Activated CD4-positive, alpha-beta T cell treated with anti-CD3 and anti-CD28 coated beads for 36 hours (primary cell): ENCODE measurements at regions of chr12 and their contacts with region 1.

Region 1: DNA sequence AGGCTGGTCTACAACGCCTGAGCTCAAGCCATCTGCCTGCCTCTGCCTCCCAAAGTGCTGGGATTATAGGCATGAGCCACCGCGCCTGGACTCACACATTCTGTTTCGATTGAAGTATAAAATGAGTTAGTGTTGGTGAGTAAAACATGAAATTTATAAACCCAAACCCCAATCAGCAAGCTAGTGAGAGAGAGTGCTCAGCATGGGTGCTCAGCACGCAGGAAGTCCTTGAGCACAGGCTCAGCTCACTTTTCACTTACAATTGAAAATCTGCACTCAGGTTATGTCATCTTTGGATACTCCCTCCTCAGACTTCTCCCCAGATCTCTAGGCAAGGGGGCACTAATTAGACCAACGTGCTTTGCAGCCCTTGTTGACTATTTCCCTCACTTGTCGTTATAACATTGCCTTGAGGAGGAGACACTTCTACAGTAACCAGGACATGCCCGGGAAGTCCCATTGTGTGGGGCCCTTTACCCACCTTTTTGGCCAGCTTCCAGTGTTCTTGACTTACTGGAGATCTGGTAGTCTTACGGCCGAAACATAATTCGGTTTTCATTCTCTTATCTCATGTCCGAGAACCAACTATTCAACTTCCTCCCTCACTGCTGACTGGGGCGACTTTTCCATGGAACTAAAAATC is 68.5 kb upstream of the AMN1 start:
- DNase-seq: peak; percentile 23
- ATAC-seq: peak; percentile 74
- H3K4me3 Mint-ChIP-seq: no peak overlapping the region
- H3K27ac Mint-ChIP-seq: peak overlapping the region; percentile 58
- H3K4me1 Mint-ChIP-seq: peaks cover 29% of the 10 kb centered on the region
- H3K27me3 Mint-ChIP-seq: no peaks in the 10 kb centered on the region

Region 2: DNA sequence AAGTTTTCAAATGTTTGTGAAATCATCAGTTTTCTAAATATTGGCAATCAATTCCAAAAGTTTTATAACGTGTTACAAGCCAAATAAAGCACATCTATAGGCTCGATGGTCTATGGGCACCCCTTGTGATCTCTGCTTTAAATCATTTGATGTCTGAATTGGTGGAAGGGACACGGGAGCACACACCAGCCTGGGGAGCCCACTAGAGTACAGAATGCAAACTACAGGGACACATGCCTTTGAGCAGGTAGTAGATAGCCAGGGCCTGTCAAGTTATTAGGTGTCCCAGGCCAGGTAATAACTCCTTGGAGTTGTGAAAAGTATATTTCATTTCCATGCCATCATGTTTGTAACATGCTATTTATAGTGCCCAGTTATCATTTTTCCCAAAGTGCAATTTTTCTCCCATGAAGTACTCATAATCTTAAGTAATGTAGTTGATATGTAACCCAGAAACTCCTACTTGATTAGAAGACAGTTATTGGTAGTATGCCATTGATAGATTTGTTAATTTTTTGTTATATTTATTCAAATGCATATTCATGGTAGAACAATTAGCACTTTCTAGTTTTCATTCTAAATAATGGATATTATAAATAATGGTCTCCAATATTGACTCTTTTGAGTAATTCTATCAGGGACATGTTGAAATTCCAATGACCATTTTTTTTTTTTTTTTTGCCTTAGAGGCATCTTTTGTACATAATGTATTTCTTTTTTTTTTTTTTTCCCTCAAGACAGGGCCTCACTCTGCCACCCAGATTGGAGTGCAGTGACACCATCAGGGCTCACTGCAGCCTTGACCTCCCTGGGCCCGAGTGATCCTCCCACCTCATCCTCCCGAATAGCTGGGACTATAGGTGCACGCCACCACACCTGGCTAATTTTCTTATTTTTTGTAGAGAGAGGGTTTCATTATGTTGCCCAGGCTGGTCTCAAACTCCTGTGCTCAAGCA is 505.1 kb after region 1 on chr12:
- CTCF ChIA-PET with region 1: no interaction called
- POLR2A ChIA-PET with region 1: no interaction called
- intact Hi-C with region 1: loop called in 1 of 2 experiments (anchors 10 kb)
- DNase-seq: peak; percentile 37
- ATAC-seq: peak; percentile 66
- H3K4me3 Mint-ChIP-seq: no peak overlapping the region
- H3K27ac Mint-ChIP-seq: no peak overlapping the region
- H3K4me1 Mint-ChIP-seq: no peaks in the 10 kb centered on the region
- H3K27me3 Mint-ChIP-seq: no peaks in the 10 kb centered on the region